CD4-positive, alpha-beta T cell (primary cell): ENCODE measurements at regions of chr1 and their contacts with region 1.

Region 1: GRCh38 chr1:33517596-33518250 is 45.3 kb downstream of the ZSCAN20 start:
- DNase-seq: no peak
- ATAC-seq: no peak
- H3K4me3 ChIP-seq: no peak overlapping the region
- H3K4me3 Mint-ChIP-seq: no peak overlapping the region
- H3K27ac ChIP-seq: no peak overlapping the region
- H3K27ac Mint-ChIP-seq: no peak overlapping the region
- H3K4me1 ChIP-seq: no peaks in the 10 kb centered on the region
- H3K4me1 Mint-ChIP-seq: no peaks in the 10 kb centered on the region
- H3K27me3 ChIP-seq: peaks cover 2 to 13% of the 10 kb centered on the region in 2 experiments
- H3K27me3 Mint-ChIP-seq: peaks cover 33% of the 10 kb centered on the region
- CTCF ChIP-seq: no peak

Region 2: DNA sequence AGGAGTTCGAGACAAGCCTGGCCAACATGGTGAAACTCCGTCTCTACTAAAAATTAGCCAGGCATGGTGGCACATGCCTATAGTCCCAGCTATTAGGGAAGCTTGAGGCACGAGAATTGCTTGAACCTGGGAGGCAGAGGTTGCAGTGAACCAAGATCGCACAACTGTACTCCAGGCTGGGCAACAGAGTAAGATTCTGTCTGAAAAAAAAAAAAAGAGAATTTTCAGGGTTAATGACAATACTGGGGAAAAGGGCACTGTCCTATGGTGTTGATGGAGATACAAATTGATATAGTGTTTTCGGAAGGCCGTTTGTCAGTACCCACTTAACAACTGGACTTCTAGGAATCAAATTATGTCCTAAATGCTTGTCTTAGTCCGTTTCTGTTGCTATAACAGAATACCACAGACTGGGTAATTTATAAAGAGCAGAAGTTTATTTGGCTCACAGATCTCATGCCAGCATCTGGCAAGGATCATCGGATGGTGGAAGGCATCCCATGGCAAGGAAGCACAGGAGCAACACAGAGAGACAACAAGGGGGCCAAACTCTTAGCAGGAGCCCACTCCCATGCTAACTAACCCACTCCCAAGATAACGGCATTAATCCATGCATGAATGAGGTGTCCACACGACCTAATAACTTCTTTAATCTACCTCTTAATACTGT is 937.2 kb before region 1 on chr1:
- CTCF ChIA-PET with region 1: no interaction called
- POLR2A ChIA-PET with region 1: no interaction called
- intact Hi-C with region 1: loop called in 1 of 2 experiments (anchors 5 kb)
- DNase-seq: no peak
- ATAC-seq: no peak
- H3K4me3 ChIP-seq: no peak overlapping the region
- H3K4me3 Mint-ChIP-seq: no peak overlapping the region
- H3K27ac ChIP-seq: no peak overlapping the region
- H3K27ac Mint-ChIP-seq: no peak overlapping the region
- H3K4me1 ChIP-seq: no peaks in the 10 kb centered on the region
- H3K4me1 Mint-ChIP-seq: no peaks in the 10 kb centered on the region
- H3K27me3 ChIP-seq: no peaks in the 10 kb centered on the region
- H3K27me3 Mint-ChIP-seq: no peaks in the 10 kb centered on the region
- CTCF ChIP-seq: no peak

Region 3: DNA sequence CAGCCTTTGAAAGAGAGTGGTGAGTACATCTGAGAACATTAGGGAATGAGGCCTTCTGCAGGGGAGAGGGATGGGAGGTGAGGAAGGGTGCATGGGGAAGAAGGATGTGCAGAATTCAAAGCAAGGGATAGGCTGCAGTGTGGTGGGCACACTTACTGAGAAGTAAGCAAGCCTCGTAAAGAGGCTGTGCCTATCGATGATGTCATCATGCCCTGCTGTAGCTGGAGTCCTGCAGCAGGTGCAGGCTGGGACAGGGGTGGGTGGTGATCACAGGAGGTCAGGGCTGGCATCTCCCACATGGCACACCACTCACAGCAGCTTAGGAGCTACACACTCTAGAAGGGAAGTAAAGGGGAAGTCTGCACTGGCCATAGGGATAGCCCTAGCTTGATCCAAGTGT is 29.1 kb before region 1 on chr1:
- CTCF ChIA-PET with region 1: no interaction called
- POLR2A ChIA-PET with region 1: no interaction called
- intact Hi-C with region 1: no loop called
- DNase-seq: no peak
- ATAC-seq: no peak
- H3K4me3 ChIP-seq: no peak overlapping the region
- H3K4me3 Mint-ChIP-seq: no peak overlapping the region
- H3K27ac ChIP-seq: no peak overlapping the region
- H3K27ac Mint-ChIP-seq: no peak overlapping the region
- H3K4me1 ChIP-seq: no peaks in the 10 kb centered on the region
- H3K4me1 Mint-ChIP-seq: no peaks in the 10 kb centered on the region
- H3K27me3 ChIP-seq: no peaks in the 10 kb centered on the region
- H3K27me3 Mint-ChIP-seq: no peaks in the 10 kb centered on the region
- CTCF ChIP-seq: no peak